ENCODE measurements at regions of chr10 and their contacts with region 1.

Region 1: GRCh38 chr10:96017191-96017687 is 26.1 kb upstream of the CCNJ start:
- DNase-seq: no peak
- ATAC-seq: peak; percentile 70 to 90 (median 82)
- H3K4me3 ChIP-seq: no peak overlapping the region
- H3K27ac ChIP-seq: no peak overlapping the region
- H3K4me1 ChIP-seq: no peaks in the 10 kb centered on the region
- H3K27me3 ChIP-seq: no peaks in the 10 kb centered on the region
- CTCF ChIP-seq: peak; percentile 75

Region 2: DNA sequence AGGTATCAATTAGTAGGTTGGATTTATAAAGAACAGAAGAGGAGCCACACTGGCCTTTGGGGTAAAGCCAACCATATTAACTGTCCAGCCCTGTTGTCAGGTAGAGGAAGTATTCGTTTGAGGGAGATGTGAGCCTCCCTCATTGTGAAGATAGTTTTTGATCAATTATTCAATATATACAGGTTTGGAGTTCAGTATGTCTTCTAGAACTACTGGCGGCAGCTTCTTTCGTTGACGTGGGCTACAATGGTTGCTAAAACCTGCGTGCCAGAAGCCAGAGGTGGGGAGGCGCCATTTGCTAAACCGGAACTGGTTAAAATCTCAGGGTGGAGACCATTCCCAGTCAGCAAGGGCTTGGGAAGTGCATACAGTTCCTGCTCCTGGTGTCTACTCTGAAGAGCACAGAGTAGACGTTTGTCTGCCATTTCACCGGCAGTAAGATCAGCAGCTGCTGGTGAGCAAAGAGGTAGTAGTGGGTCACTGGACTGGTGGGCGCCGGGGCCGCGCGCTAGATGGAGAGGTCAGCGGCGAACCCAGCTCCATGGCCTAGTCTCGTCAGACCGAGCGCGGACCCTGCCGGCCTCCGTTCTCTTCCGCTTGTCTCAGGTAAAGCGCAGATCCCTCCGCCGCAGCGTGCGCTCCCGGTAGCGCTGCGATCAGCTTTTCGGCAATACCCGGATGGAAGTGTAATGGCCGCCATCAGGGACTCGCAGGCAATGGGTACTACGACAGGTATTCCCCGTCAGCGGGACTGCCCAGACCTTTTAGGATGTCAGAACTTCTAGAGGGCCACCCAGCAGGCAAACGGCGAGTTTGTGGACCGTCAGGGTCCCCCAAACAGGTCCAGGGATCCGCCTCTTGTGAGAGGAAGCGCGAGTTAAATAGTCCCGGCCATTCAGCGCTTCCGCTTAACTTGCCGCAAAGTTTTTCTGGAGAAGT is 112.4 kb after region 1 on chr10 and contains the start of gene ZNF518A:
- intact Hi-C with region 1: loop called in 1 of 2 experiments (anchors 5 kb)
- DNase-seq: peak; percentile 91 to 95
- ATAC-seq: peak; percentile 97 to 99 (median 98)
- H3K4me3 ChIP-seq: peak within 1 kb of the TSS; percentile 88
- H3K27ac ChIP-seq: peak within 1 kb of the TSS; percentile 88
- H3K4me1 ChIP-seq: no peaks in the 10 kb centered on the region
- H3K27me3 ChIP-seq: peaks cover 0 to 43% (median 18%) of the 10 kb centered on the region in 3 donors
- CTCF ChIP-seq: no peak
- total RNA-seq, gene ZNF518A: 7.4 to 10.2 (median 8.2) TPM

Region 3: DNA sequence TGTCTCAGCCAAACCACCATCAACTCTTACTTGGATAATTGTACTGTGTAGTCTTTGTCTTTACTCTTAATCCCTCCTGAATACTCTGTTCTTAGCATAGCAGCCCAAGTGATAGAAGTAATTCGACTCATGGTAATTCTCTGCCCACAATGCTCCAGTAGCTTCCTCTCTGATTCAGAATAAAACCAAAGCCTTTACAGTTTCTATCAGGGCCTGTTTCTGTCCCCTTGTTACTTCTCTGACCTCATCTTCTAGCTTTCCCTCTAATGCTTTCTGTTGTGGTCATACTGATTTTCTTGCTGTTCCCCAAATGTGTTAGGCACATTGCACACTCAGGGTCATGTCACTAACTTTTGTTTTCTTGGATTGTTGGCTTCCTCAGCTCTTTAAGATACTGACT is 120.9 kb after region 1 on chr10:
- intact Hi-C with region 1: loop called in 1 of 2 experiments (anchors 5 kb)
- DNase-seq: no peak
- ATAC-seq: no peak
- H3K4me3 ChIP-seq: no peak overlapping the region
- H3K27ac ChIP-seq: no peak overlapping the region
- H3K4me1 ChIP-seq: no peaks in the 10 kb centered on the region
- H3K27me3 ChIP-seq: no peaks in the 10 kb centered on the region
- CTCF ChIP-seq: no peak

Region 4: DNA sequence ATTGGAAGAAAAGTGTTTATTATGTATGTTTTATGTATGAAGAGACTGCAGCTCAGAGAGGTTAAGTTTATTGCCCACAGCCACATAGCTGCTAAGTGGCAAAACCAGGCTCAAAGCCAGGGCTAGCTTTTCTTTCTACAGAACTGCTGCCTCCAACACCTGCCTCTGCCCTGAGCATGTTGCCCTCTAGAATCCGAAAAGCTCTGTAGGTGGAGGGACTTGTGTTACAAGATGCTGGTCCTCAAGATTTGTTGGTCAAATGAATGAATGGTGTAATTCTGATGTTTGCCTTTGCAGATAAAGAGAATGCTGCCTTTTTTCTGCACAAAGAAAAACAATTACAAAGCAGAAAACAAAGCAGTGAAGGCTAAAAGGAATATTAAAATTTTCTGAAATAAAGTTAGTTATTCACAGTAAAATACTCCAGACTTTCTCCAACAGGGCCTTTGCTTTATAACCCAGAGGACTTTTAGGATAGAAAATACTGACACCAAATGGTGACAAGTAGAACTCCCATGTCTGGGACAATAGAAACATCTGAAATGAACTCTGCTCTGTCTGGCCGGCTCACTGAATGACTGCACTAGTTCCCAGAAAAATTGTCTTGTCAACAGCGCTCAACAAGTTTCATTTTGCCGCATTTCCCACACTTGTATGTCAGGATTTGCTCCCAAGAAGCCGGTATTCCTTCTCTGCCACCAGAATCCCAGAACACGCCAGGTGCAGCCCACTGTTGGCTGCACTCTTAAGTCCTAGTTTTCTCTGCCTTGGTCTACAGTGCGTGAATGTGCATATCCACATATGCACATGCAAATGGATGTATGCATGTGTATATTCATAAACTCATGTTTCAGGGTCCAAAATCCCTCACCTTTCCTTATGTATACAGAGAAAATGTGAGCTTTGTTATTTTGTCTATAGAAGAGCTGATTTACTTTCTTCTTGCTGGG is 276.0 kb after region 1 on chr10:
- intact Hi-C with region 1: loop called (anchors 5 kb)
- DNase-seq: no peak
- ATAC-seq: peak; percentile 65 to 84 (median 74)
- H3K4me3 ChIP-seq: no peak overlapping the region
- H3K27ac ChIP-seq: no peak overlapping the region
- H3K4me1 ChIP-seq: peaks cover 4% of the 10 kb centered on the region
- H3K27me3 ChIP-seq: peaks cover 0 to 6% (median 0%) of the 10 kb centered on the region in 3 donors
- CTCF ChIP-seq: peak; percentile 65

Region 5: DNA sequence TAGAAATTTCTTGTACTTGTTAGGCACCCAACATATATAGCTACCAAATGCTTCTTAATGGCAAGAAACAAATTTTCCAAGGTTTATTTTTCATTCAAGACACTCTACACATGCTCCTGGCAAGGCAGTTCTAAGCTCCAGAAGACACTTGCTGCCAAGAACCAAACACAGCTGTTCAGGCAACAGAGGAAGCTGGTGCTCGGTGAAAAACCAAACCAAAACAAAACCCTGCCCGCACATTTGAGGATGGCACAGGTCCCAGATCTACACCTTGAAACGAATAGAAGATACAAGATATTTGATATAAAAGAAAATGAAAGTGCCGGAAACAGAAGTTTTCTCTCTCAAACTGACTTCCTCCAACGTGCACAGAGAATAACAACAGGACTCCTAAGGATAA is 282.1 kb after region 1 on chr10:
- intact Hi-C with region 1: loop called (anchors 5 kb)
- DNase-seq: no peak
- ATAC-seq: no peak
- H3K4me3 ChIP-seq: no peak overlapping the region
- H3K27ac ChIP-seq: no peak overlapping the region
- H3K4me1 ChIP-seq: no peaks in the 10 kb centered on the region
- H3K27me3 ChIP-seq: peaks cover 0 to 30% (median 4%) of the 10 kb centered on the region in 3 donors
- CTCF ChIP-seq: no peak

Region 6: DNA sequence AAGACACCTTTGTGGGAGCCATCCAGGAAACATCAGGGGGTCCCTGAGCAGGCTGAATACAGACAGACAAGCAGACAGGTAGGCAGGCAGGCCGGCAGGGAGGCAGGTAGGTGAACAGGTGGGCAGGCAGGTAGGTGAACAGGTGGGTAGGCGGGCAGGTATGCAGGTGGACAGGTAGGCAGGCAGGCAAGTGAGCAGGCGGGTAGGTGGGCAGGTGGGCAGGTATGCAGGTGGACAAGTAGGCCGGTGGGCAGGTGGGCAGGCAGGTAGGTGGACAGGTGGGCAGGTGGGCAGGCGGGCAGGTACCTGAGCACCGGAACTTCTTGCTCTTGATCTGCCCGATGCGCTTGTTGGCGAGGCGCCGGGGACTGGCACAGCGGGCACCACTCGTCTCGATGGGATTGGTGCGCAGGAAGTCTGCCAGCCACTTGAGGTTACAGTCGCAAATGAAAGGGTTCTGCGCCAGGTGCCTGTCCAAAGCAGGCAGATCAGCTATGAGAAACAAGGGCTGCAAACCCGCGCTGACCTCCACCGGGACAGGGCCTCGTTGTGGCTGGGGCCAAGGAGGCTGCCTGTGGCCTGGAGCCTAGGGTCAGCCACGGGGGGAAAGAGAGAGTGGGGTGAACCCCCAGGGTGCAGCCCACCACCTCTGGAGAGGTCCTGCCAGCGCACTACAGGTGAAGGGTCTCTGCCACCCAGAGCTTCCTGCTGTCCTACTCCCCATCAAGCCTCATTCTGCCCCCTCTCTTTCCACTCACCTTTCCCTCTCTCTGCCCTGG is 1031.6 kb after region 1 on chr10:
- intact Hi-C with region 1: loop called in 1 of 2 experiments (anchors 10 kb)
- DNase-seq: no peak
- ATAC-seq: no peak
- H3K4me3 ChIP-seq: no peak overlapping the region
- H3K27ac ChIP-seq: no peak overlapping the region
- H3K4me1 ChIP-seq: no peaks in the 10 kb centered on the region
- H3K27me3 ChIP-seq: no peaks in the 10 kb centered on the region
- CTCF ChIP-seq: no peak

Measured in psoas muscle (tissue), 8 donors.